ENCODE measurements at regions of chr5 and their contacts with region 1.

Region 1: GRCh38 chr5:168047043-168047668 is 244.3 kb upstream of the WWC1 start:
- DNase-seq: no peak
- ATAC-seq: peak; percentile 75

Region 2: GRCh38 chr5:167723254-167723871 is 323.8 kb before region 1 on chr5:
- intact Hi-C with region 1: loop called (anchors 1 kb)
- DNase-seq: peak; percentile 80
- ATAC-seq: peak; percentile 82

Region 3: DNA sequence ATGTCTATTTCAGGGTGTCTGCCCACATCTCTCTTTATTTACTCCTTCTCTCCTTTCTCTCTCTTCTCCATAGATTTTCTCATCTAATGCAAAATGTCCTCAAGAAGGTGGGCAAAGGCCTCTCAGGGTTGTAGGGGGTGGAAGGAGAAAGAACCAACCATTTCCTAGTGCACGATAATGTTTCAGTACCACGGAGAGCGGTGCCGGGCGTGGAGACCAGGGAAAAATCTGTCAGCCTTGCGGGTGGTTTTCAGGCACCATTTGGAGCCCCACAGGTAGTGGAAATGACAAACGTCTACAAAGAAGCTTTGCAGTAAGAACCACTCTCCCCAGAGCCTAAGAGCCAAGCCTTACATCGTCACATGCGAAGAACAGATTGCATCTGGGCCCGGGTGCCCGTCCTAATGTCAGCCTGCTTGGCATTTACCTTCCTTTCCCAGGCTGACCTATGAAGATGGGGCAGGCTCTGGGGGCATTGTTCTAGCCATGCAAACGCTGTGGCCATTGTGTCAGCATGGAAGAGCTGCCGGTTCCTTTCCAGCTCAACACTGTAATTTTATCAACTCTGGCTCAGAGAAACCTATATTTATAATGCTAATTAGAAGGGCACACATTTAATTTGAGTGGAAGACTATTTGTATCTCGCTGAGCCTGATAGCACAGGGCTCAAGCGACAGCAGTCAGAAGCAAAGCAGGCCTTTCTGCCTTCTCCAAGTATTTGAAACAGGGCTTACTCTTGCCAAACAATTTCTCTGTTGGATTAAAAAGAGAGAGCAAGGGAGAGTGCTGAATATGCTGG is 185.8 kb before region 1 on chr5:
- intact Hi-C with region 1: no loop called
- DNase-seq: no peak
- ATAC-seq: no peak

Region 4: DNA sequence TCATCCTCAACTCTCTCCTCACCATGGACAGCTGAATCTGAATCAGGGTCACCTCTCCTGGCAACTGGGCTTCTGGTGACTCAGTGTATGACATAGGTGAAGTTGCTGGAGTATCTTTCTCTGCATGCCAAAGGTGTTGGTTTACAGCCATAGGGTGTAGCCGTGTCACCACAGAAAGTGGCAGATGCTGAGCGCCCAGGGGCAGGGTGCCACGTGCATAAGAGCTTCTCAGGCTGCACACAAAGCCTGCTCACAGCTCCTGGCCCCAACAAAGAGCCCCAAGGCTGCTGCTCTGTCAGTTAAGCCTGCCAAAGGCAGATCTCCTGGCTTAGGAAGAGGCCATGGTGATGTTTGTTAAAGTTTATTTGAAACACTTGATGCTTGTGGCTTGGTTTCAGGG is 53.4 kb before region 1 on chr5:
- intact Hi-C with region 1: no loop called
- DNase-seq: no peak
- ATAC-seq: peak; percentile 15

Region 5: DNA sequence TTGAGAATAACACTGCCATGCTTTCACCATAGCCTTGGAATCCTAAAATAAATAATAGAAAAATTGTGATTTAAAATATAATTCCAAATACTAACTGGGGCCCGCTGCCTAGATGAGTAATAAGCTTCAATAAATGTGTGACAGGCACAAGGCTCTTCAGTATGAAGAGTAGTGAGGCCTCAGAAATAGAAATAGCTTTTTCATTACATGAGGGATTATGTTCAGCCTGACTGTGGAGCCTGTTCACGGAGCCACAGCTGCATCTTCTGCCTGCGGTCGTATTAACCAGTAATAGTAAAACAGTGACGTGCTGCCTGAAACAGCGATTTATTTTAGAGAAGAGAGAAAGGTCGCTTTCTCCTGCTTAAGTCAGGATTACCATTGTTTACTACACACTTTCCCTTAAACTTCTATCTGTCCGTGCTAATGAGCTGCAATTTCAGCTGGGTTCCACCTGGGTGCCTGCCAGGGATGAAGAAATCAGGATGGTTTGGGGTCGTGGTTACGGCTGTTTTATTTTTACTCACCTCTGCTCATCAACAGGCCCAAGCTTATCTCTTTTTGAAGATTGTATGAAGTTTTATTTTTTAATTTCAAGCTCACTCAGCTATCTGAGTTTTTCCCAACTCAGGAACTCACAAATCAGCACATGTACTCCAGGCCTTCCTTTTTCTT is 40.6 kb before region 1 on chr5:
- intact Hi-C with region 1: no loop called
- DNase-seq: no peak
- ATAC-seq: peak; percentile 66

Measured in Right ventricle myocardium inferior (tissue), 1 donor.